Activated CD4-positive, alpha-beta T cell treated with anti-CD3 and anti-CD28 coated beads, Interleukin-2, amount 10 ng/mL, durations not matched to agents 24 days and 14 days (primary cell): ENCODE measurements at regions of chr19 and their contacts with region 1.

Region 1: DNA sequence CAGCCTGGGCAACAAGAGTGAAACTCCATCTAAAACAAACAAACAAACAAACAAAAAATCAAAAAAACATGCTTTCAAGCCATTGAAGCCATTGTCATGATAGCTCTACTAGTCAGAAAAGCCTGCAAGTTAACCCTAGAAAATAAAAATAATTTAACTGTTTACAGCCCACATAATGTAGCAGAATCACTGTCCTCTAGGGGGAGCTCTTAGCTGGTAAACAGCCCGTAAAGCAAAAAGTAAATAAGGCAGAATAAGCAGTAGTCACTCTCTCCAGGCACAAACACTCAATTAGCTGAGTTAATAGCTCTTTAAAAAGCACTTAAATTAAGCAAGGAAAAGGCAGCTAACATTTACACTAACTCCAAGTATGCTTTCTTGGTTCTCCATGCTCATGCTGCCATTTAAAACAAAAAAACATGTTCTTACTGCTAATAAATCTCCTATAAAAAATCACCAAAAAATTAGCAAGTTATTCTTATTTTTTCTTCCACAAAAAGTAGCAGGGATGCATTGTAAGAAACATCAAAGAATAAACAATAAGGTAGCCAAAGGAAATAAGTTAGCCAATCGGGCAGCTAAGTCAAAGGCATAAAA is 11.3 kb downstream of the LILRB4 start:
- DNase-seq: peak; percentile 75
- H3K4me3 Mint-ChIP-seq: no peak overlapping the region
- H3K27ac Mint-ChIP-seq: no peak overlapping the region
- H3K4me1 Mint-ChIP-seq: no peaks in the 10 kb centered on the region
- H3K27me3 Mint-ChIP-seq: peaks cover 3% of the 10 kb centered on the region

Region 2: DNA sequence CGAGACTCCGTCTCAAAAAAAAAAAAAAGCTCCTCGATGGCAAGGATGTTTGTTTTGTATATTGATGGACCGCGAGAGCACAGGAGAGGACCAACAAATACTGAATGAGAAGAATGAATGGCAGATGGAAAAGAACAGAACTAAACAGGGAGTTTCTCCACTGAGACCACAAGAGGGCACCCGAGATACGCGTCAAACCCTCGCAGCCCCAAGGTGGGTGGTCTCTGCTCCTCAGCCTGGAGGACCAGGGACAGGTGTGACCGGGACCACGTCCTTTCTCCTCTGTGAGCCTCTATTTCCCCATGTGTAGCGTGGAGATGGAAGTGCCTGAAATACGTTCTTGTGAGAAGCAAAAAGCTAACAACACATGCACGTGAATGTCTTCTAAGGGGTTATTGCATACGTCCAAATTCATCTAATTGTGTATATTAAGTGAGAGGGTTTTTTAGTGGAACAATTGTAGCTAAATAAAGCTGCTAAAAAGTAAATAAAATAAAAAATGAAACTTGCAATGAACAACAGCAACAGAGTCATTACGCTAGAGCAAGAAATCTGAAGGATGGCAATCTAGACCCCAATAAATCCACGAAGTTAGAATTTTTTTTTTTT is 192.7 kb before region 1 on chr19:
- intact Hi-C with region 1: loop called (anchors 1 kb)
- DNase-seq: peak; percentile 84
- H3K4me3 Mint-ChIP-seq: no peak overlapping the region
- H3K27ac Mint-ChIP-seq: no peak overlapping the region
- H3K4me1 Mint-ChIP-seq: peaks cover 8% of the 10 kb centered on the region
- H3K27me3 Mint-ChIP-seq: peaks cover 24% of the 10 kb centered on the region

Region 3: GRCh38 chr19:54506079-54506478 is 168.0 kb before region 1 on chr19:
- intact Hi-C with region 1: no loop called
- DNase-seq: no peak
- H3K4me3 Mint-ChIP-seq: peak overlapping the region; percentile 25
- H3K27ac Mint-ChIP-seq: no peak overlapping the region
- H3K4me1 Mint-ChIP-seq: peaks cover 22% of the 10 kb centered on the region
- H3K27me3 Mint-ChIP-seq: no peaks in the 10 kb centered on the region

Region 4: DNA sequence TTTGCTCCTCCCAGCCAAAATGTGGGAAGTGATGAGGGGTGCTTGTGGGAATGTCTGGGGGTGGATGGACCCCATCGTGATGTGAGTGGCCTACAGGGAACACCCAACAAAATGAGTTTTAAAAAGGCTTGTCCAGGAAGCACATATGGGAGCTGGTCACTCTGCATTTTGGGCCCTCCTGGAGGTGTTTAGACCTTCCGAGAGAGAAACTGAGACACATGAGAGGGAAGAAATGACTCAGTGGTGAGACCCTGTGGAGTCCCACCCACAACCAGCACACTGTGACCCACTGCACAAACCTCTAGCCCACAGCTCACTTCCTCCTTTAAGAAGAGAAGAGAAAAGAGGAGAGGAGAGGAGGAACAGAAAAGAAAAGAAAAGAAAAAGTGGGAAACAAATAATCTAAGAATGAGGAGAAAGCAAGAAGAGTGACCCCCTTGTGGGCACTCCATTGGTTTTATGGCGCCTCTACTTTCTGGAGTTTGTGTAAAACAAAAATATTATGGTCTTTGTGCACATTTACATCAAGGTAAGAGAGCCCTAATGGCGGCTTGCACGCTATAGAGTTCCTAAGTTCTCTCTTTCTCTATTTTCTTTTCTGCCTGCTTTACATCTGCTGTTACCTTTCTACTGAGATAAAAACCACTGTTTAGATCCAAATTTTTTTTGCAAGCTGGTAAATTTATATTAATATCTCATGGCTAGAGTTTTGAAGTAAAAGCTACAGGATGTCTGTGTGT is 57.1 kb before region 1 on chr19:
- intact Hi-C with region 1: no loop called
- DNase-seq: no peak
- H3K4me3 Mint-ChIP-seq: no peak overlapping the region
- H3K27ac Mint-ChIP-seq: no peak overlapping the region
- H3K4me1 Mint-ChIP-seq: no peaks in the 10 kb centered on the region
- H3K27me3 Mint-ChIP-seq: peaks cover 13% of the 10 kb centered on the region

Region 5: GRCh38 chr19:54653181-54653809 is 20.8 kb before region 1 on chr19:
- intact Hi-C with region 1: loop called (anchors 1 kb)
- DNase-seq: no peak
- H3K4me3 Mint-ChIP-seq: no peak overlapping the region
- H3K27ac Mint-ChIP-seq: no peak overlapping the region
- H3K4me1 Mint-ChIP-seq: no peaks in the 10 kb centered on the region
- H3K27me3 Mint-ChIP-seq: peaks cover 2% of the 10 kb centered on the region